ENCODE measurements at regions of chr14 and their contacts with region 1.

Region 1: GRCh38 chr14:64952598-64953309 is 10.2 kb upstream of the GPX2 start:
- DNase-seq: no peak
- H3K27ac ChIP-seq: no peak overlapping the region
- CTCF ChIP-seq: no peak

Region 2: DNA sequence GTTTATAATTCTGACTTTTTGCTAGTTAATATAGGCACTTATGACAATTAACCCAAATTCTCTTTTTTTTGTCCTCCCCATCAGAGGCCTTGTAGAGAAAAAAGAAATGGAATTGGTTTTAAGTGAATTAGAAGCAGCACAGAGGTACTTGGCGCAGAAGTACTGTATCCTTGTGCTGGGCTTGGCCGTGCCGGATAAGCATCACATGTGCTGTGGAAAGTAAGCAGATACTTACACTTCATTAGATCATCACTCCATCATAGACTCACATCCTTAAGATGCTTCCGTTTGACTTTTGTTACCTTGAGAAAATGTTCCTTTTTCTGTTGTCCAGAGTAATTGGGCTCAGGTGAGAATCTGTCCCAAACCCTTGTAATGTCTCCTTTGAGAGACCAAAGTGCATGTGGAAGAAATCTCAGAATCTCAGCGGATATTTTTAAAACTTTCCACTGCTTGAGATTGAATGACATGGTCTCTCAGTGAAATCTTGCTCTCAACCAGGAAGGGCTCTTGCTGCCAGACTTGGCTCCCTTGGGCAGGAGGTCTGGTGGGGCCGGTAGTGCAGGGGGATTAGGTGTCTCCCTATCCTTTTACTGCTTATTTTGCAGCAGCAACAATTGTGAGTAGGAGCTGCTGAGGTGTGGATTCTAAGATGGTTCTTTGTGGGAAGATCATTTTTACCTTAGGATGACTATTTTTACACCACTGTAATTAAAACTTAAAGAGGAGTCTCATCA is 378.2 kb before region 1 on chr14:
- CTCF ChIA-PET with region 1: interaction called, 10 read pairs
- POLR2A ChIA-PET with region 1: no interaction called
- DNase-seq: no peak
- H3K27ac ChIP-seq: no peak overlapping the region
- CTCF ChIP-seq: no peak

Measured in RWPE1 (cell line).